Spleen (tissue), 13 donors: ENCODE measurements at regions of chr1 and their contacts with region 1.

Region 1: DNA sequence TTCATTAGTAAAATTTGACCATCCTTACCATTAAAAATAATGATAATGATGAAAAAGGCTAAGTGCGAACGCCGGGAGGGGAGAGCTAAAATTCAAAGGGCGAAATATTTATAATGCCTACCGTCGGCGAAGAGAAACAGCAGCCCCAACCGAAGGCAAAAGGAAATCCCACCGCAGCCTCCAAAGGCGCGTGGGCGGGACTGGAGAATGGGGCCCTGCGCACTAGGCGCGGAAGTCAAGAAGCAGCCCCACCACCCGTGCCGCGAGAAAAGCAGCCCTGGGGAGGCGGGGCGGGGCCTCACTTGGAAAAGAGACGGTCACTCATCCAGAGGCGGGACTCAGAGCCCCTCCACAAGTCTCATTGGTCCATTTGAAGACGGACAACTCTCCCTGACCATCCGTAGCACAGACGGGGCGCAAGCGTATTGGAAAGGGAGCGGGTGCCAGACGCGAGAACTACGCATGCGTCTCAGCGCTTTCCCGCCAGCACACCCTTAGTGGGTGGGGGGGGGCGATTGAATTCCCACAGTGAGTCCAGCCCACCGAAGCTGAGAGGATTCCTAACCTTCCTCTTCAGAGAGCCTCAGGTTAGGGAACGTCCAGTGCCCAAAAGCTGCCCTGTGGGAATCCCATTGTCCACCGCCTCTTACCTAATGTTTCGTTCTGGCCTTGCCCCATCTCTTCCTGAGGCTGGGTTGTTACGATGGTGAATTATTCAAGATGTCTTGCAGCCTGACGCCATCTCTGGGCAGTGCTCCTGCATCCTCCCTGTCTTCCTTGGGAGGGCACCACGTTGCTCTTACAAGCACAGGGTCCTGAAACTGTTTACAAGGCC is 19.0 kb downstream of the MTX1 start:
- DNase-seq: peak; percentile 98
- H3K4me3 ChIP-seq: peak overlapping the region; percentile 52 to 81 (median 62)
- H3K27ac ChIP-seq: peak overlapping the region; percentile 71 to 90 (median 90)
- H3K4me1 ChIP-seq: peaks cover 7 to 64% (median 47%) of the 10 kb centered on the region in 6 donors
- H3K27me3 ChIP-seq: no peaks in the 10 kb centered on the region
- CTCF ChIP-seq: peak in 2 of 11 experiments; percentile 13 to 20
- POLR2A ChIP-seq: peak in 2 of 3 donors; percentile 36 to 57

Region 2: GRCh38 chr1:154567386-154568156 is 659.9 kb before region 1 on chr1 and contains the start of gene CHRNB2:
- intact Hi-C with region 1: no loop called
- DNase-seq: peak; percentile 90
- H3K4me3 ChIP-seq: peak within 1 kb of the TSS in 6 of 8 donors; percentile 5 to 55 (median 10)
- H3K27ac ChIP-seq: no peak within 1 kb of the TSS
- H3K4me1 ChIP-seq: peaks cover 3 to 12% (median 9%) of the 10 kb centered on the region in 6 donors
- H3K27me3 ChIP-seq: peaks cover 0 to 61% (median 20%) of the 10 kb centered on the region in 7 donors
- CTCF ChIP-seq: peak in 1 of 11 experiments; percentile 16
- POLR2A ChIP-seq: no peak
- total RNA-seq, gene CHRNB2: 0.18 to 0.32 TPM in 2 of 7 donors, not detected in the others

Region 3: DNA sequence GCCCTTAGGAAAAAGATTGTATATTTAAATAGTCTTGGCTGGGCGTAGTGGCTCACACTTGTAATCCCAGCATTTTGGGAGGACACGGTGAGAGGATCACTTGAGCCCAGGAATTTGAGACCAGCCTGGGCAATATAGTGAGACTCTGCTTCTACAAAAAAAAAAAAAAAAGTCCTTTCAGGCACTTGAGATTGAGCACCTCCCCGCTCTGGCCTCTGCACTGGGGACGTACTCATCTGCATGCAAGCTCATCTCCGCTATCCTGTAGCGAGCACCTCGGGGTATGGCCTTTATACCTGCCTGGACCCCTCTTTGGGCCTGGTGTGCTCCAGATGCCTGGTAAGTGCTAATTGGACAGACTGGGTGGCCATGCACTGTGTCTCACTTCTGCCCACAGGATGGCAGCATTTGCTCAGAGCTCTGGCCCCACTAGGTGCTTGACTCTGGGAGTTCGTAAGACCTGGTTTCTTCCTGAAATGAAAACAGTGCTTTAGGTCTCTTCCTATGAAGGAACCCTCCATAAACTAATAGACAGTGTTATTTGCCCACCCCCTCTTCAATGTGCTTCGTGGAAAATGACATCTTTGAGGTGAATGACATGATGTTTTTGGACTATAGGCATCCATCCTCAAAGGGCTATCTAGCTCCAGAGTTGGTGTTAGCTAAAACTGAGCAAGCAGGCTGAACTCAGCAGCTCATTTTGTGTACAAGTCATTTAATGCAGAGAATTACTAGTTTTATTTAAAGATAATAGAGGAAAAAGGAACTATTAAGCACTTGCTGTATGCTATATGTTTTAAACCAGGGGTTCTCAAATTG is 557.8 kb before region 1 on chr1:
- intact Hi-C with region 1: no loop called
- DNase-seq: peak; percentile 88
- H3K4me3 ChIP-seq: no peak overlapping the region
- H3K27ac ChIP-seq: no peak overlapping the region
- H3K4me1 ChIP-seq: peaks cover 0 to 7% (median 0%) of the 10 kb centered on the region in 6 donors
- H3K27me3 ChIP-seq: no peaks in the 10 kb centered on the region
- CTCF ChIP-seq: peak; percentile 64 to 88 (median 77)
- POLR2A ChIP-seq: no peak

Region 4: GRCh38 chr1:155172732-155173477 is 54.6 kb before region 1 on chr1 and contains the start of gene KRTCAP2:
- intact Hi-C with region 1: loop called (anchors 10 kb)
- DNase-seq: peak; percentile 99
- H3K4me3 ChIP-seq: peak within 1 kb of the TSS; percentile 64 to 88 (median 79)
- H3K27ac ChIP-seq: peak within 1 kb of the TSS; percentile 82 to 97 (median 96)
- H3K4me1 ChIP-seq: peaks cover 13 to 71% (median 49%) of the 10 kb centered on the region in 6 donors
- H3K27me3 ChIP-seq: peaks cover 0 to 25% (median 15%) of the 10 kb centered on the region in 7 donors
- CTCF ChIP-seq: peak; percentile 88 to 98 (median 97)
- POLR2A ChIP-seq: peak in 1 of 3 donors; percentile 31
- total RNA-seq, gene KRTCAP2: 113 to 154 (median 136) TPM

Region 5: GRCh38 chr1:156096640-156097391 is 869.3 kb after region 1 on chr1:
- intact Hi-C with region 1: no loop called
- DNase-seq: peak; percentile 96
- H3K4me3 ChIP-seq: peak overlapping the region in 2 of 8 donors; percentile 7 to 46
- H3K27ac ChIP-seq: peak overlapping the region; percentile 49 to 85 (median 76)
- H3K4me1 ChIP-seq: peaks cover 18 to 49% (median 34%) of the 10 kb centered on the region in 6 donors
- H3K27me3 ChIP-seq: peaks cover 0 to 1% (median 0%) of the 10 kb centered on the region in 7 donors
- CTCF ChIP-seq: peak; percentile 84 to 96 (median 94)
- POLR2A ChIP-seq: no peak